Activated B cell treated with CpG ODN at 0.5 μM for 24 hours (primary cell): ENCODE measurements at regions of chr11 and their contacts with region 1.

Region 1: GRCh38 chr11:2400069-2400760 is at the start of gene TSSC4:
- DNase-seq: peak; percentile 100
- ATAC-seq: peak; percentile 86
- H3K4me3 Mint-ChIP-seq: peak within 1 kb of the TSS; percentile 88
- H3K27ac Mint-ChIP-seq: peak within 1 kb of the TSS; percentile 83
- H3K4me1 Mint-ChIP-seq: peaks cover 27% of the 10 kb centered on the region
- H3K27me3 Mint-ChIP-seq: no peaks in the 10 kb centered on the region
- CTCF ChIP-seq: peak; percentile 73
- total RNA-seq, gene TSSC4: 59.4 and 59.7 TPM in 2 replicates

Region 2: GRCh38 chr11:2269601-2270321 is 130.5 kb before region 1 on chr11:
- CTCF ChIA-PET with region 1: no interaction called
- POLR2A ChIA-PET with region 1: interaction called, 4 read pairs
- intact Hi-C with region 1: loop called (anchors 1 kb)
- DNase-seq: peak; percentile 55
- ATAC-seq: peak; percentile 23
- H3K4me3 Mint-ChIP-seq: peak overlapping the region; percentile 70
- H3K27ac Mint-ChIP-seq: peak overlapping the region; percentile 74
- H3K4me1 Mint-ChIP-seq: peaks cover 41% of the 10 kb centered on the region
- H3K27me3 Mint-ChIP-seq: peaks cover 6% of the 10 kb centered on the region
- CTCF ChIP-seq: no peak

Region 3: DNA sequence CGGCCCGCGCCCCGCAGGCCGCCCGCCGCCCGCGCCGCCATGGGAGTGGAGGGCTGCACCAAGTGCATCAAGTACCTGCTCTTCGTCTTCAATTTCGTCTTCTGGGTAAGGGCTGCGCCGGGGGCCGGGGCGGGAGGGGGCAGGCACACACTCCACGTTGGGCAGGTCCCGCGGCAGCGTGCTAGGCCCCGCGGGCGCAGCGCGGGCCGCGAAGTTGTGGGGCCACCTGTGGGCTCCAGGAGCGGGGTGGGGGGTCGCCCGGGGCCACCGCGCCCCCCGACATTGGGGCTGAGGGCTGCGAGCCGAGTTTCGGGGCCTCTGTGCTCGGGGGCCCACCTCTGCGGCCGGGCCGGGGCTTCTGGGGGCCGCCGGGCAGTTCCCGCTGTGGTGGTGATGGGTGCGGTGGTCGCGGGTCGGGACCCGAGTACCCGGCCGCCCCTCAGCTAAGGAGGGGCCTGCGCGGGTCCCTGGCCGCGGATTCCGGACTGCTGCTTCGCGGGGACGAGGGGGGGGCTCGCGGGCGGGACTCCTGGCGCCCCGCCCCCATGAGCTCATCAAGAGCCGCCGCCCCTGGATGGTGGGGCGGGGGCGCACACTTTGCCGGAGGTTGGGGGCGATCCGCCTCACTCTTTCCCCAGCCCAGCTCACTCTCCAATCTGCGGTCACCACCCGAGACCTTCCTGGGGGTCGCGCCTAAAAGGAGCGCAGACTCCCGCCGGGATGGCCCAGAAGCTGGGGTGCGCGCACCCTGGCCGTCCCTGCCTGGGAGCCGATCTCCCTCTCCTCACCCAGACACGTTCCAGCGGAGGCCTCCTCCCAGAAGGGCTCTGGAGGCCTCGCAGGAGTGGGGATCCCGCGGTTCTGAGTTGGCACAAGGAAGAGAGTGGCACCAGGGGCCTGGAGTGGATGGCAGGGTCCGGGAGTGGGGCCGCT is 22.4 kb before region 1 on chr11:
- CTCF ChIA-PET with region 1: interaction called, 4 read pairs
- POLR2A ChIA-PET with region 1: interaction called, 91 read pairs
- intact Hi-C with region 1: loop called (anchors 1 kb)
- DNase-seq: no peak
- ATAC-seq: peak; percentile 43
- H3K4me3 Mint-ChIP-seq: peak overlapping the region; percentile 82
- H3K27ac Mint-ChIP-seq: peak overlapping the region; percentile 86
- H3K4me1 Mint-ChIP-seq: peaks cover 46% of the 10 kb centered on the region
- H3K27me3 Mint-ChIP-seq: no peaks in the 10 kb centered on the region
- CTCF ChIP-seq: no peak

Region 4: DNA sequence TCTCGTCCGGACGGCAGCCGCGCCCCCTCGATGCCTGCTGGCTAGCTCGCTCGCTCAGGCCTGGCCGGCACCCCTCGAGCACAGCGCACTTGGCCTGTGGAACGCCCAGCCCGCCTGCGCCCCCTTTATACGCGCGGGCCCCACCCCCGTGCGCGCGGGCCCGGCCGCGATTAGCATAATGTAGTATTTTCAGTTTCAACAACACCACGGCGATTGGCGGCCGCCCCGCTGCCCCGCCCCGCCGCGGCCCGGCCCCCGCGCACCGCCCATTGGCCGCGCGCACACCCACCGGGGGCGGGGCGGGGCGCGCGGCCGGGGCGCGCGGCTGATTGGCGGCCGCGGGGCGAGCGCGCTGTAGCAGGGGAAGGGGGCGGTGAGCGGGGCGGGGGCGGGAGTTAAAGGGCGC is 485.5 kb after region 1 on chr11 and contains the start of gene CDKN1C:
- CTCF ChIA-PET with region 1: no interaction called
- POLR2A ChIA-PET with region 1: no interaction called
- intact Hi-C with region 1: loop called (anchors 1 kb)
- DNase-seq: peak; percentile 77
- ATAC-seq: peak; percentile 90
- H3K4me3 Mint-ChIP-seq: peak within 1 kb of the TSS; percentile 90
- H3K27ac Mint-ChIP-seq: no peak within 1 kb of the TSS
- H3K4me1 Mint-ChIP-seq: peaks cover 9% of the 10 kb centered on the region
- H3K27me3 Mint-ChIP-seq: peaks cover 9% of the 10 kb centered on the region
- CTCF ChIP-seq: no peak
- total RNA-seq, gene CDKN1C: 1.1 and 1.4 TPM in 2 replicates

Region 5: DNA sequence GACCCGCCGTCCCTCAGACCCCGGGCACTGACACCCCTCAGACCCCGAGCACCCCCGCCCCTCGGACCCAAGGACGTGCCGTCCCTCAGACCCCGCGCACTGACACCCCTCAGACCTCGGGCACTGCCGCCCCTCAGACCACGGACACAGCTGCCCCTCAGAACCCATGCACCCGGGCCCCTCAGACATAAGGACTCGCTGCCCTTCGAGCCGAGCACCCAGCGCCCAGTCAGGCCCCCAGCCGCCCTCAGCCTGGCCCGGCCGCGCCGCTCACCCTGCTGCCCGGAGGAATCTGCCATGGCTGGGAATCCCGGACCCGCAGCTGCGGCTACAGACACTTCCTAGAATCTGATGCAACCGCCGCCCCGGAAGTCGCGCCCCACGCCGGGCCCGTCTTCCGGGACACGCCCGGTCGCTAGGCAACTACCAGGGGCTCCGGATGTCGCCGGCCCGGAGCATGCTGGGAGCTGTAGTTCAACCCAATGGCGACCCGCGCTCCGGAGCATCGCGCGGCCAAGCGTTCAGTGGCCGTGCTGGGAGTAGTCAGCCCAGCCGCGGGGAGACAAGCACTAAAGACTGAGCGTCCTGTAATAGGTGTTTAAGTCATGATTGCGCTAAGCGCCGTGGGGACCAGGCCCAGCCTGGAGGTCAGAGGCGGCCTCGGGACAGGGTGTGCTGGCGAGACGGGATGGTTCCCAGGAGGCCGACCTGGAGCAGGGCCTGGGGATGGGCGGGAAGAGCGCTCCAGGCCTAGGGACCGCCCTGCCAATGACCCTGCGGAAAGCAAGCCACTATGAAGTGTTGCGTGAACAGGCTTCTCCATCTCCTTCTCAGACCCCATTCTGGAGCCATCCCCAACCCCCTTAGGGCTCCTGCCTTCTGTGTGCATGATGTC is 657.1 kb after region 1 on chr11 and contains the start of gene CARS1:
- CTCF ChIA-PET with region 1: no interaction called
- POLR2A ChIA-PET with region 1: no interaction called
- intact Hi-C with region 1: loop called (anchors 1 kb)
- DNase-seq: peak; percentile 88
- ATAC-seq: peak; percentile 89
- H3K4me3 Mint-ChIP-seq: peak within 1 kb of the TSS; percentile 90
- H3K27ac Mint-ChIP-seq: peak within 1 kb of the TSS; percentile 85
- H3K4me1 Mint-ChIP-seq: peaks cover 36% of the 10 kb centered on the region
- H3K27me3 Mint-ChIP-seq: no peaks in the 10 kb centered on the region
- CTCF ChIP-seq: no peak
- total RNA-seq, gene CARS1: 95.9 and 110 TPM in 2 replicates